Activated CD4-positive, alpha-beta T cell treated with anti-CD3 and anti-CD28 coated beads, Interleukin-2, amount 10 ng/mL, durations not matched to agents 7 days and 5 days (primary cell): ENCODE measurements at regions of chr12 and their contacts with region 1.

Region 1: GRCh38 chr12:49740930-49741881 is at the start of gene TMBIM6:
- DNase-seq: peak; percentile 100
- H3K4me3 Mint-ChIP-seq: peak within 1 kb of the TSS; percentile 82
- H3K27ac Mint-ChIP-seq: peak within 1 kb of the TSS; percentile 96
- H3K4me1 Mint-ChIP-seq: peaks cover 36% of the 10 kb centered on the region
- H3K27me3 Mint-ChIP-seq: no peaks in the 10 kb centered on the region
- total RNA-seq, gene TMBIM6: 426 to 442 TPM

Region 2: DNA sequence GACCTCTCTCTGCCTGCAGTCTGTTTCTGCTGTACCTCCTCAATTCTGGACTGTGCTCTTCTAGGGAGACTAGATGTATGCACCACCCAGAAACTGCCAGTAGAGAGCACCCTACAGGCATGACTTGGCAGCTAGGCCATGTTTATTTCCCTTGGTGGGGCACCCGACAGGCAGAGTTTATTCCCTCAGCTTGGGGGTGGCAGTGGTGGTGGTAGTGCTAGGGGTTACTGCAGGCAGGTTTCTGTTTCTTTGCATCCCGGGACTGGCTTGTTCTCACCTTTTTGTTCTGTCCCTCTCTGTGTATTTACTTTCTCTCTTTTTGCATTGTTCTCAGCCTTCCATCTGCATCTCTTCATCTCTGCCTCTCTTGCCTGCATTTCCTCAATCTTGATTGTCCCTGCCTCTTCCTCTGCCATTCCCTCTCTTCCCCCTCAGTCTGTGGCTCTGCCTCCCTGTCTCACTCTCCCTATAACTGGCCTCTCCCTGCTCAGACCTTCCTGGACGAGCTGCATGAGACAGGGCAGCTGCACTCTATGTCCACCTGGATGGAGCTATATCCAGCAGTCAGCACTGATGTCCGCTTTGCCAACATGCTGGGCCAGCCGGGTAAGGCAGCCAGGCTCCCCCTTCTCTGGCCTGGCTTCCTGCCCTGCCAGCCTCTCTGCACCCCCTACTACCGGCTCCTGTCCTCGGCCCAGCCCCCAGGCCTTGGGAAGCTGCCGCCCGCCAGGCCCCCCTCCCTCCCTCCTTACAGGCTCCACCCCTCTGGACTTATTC is 104.0 kb before region 1 on chr12:
- CTCF ChIA-PET with region 1: interaction called, 20 read pairs
- POLR2A ChIA-PET with region 1: interaction called, 4 read pairs
- DNase-seq: peak; percentile 78
- H3K4me3 Mint-ChIP-seq: no peak overlapping the region
- H3K27ac Mint-ChIP-seq: peak overlapping the region; percentile 58
- H3K4me1 Mint-ChIP-seq: peaks cover 12% of the 10 kb centered on the region
- H3K27me3 Mint-ChIP-seq: no peaks in the 10 kb centered on the region

Region 3: GRCh38 chr12:49651855-49652254 is 89.4 kb before region 1 on chr12:
- CTCF ChIA-PET with region 1: interaction called, 12 read pairs
- POLR2A ChIA-PET with region 1: interaction called, 3 read pairs
- DNase-seq: no peak
- H3K4me3 Mint-ChIP-seq: no peak overlapping the region
- H3K27ac Mint-ChIP-seq: peak overlapping the region; percentile 34
- H3K4me1 Mint-ChIP-seq: peaks cover 33% of the 10 kb centered on the region
- H3K27me3 Mint-ChIP-seq: no peaks in the 10 kb centered on the region

Region 4: GRCh38 chr12:49730568-49731101 is 10.6 kb before region 1 on chr12:
- CTCF ChIA-PET with region 1: interaction called, 10 read pairs
- POLR2A ChIA-PET with region 1: no interaction called
- DNase-seq: no peak
- H3K4me3 Mint-ChIP-seq: no peak overlapping the region
- H3K27ac Mint-ChIP-seq: no peak overlapping the region
- H3K4me1 Mint-ChIP-seq: peaks cover 5% of the 10 kb centered on the region
- H3K27me3 Mint-ChIP-seq: peaks cover 24% of the 10 kb centered on the region

Region 5: GRCh38 chr12:49776413-49776812 is 35.2 kb after region 1 on chr12:
- CTCF ChIA-PET with region 1: interaction called, 13 read pairs
- POLR2A ChIA-PET with region 1: no interaction called
- DNase-seq: peak; percentile 67
- H3K4me3 Mint-ChIP-seq: no peak overlapping the region
- H3K27ac Mint-ChIP-seq: no peak overlapping the region
- H3K4me1 Mint-ChIP-seq: peaks cover 13% of the 10 kb centered on the region
- H3K27me3 Mint-ChIP-seq: peaks cover 14% of the 10 kb centered on the region

Region 6: DNA sequence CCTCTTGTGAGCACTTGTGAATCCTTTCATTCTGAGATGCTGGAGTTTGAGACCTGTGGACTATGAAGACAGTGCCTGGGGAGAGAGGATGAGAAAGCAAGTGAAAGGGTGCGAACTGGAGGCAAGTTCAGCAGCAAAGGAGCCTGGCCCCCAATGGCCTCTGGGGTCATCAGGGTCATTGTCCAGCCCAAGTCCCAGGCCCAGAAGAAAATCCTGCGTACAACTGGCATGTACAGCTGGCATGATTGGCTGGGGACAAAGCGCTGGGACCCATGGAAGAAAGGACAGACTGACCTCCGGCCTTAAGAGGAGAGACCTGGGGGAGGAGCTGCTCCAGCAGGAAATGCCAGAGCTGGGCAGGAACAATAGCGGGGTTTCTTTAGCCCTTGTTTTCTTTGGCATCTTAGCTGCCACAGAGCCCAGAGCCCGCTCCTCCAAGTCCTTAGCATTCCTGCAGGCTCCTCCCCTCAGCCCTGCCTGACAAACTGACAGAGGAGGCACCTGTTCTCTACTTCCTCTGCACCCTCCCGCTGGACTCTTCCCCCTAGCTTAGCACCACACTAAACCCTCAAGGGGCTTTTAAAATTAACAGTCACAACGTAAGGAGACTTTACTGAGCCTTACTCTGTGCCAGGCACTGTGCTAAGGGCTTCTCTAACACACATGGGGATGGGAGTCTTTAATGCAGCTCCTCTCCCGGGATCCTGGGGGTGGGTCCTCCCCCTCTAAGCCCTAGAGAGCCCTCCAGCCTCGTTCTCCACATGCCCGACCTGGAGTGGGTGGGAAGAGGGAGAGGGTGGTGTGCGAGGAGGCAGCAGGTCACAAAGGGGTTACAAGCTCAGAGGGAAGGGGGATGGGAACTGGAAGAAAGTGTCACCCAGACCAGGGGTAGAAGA is 218.6 kb after region 1 on chr12:
- CTCF ChIA-PET with region 1: no interaction called
- POLR2A ChIA-PET with region 1: no interaction called
- DNase-seq: no peak
- H3K4me3 Mint-ChIP-seq: no peak overlapping the region
- H3K27ac Mint-ChIP-seq: no peak overlapping the region
- H3K4me1 Mint-ChIP-seq: peaks cover 10% of the 10 kb centered on the region
- H3K27me3 Mint-ChIP-seq: peaks cover 82% of the 10 kb centered on the region